ENCODE measurements at regions of chr9 and their contacts with region 1.

Region 1: DNA sequence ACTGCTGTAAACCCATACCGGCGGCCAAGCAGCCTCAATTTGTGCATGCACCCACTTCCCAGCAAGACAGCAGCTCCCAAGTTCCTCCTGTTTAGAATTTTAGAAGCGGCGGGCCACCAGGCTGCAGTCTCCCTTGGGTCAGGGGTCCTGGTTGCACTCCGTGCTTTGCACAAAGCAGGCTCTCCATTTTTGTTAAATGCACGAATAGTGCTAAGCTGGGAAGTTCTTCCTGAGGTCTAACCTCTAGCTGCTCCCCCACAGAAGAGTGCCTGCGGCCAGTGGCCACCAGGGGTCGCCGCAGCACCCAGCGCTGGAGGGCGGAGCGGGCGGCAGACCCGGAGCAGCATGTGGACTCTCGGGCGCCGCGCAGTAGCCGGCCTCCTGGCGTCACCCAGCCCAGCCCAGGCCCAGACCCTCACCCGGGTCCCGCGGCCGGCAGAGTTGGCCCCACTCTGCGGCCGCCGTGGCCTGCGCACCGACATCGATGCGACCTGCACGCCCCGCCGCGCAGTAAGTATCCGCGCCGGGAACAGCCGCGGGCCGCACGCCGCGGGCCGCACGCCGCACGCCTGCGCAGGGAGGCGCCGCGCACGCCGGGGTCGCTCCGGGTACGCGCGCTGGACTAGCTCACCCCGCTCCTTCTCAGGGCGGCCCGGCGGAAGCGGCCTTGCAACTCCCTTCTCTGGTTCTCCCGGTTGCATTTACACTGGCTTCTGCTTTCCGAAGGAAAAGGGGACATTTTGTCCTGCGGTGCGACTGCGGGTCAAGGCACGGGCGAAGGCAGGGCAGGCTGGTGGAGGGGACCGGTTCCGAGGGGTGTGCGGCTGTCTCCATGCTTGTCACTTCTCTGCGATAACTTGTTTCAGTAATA is at the start of gene FXN:
- DNase-seq: peak; percentile 61 to 84 (median 78)
- ATAC-seq: peak; percentile 90 to 93
- H3K4me3 Mint-ChIP-seq: peak within 1 kb of the TSS; percentile 92 to 99 (median 96)
- H3K27ac Mint-ChIP-seq: peak within 1 kb of the TSS; percentile 87 to 95 (median 92)
- H3K4me1 Mint-ChIP-seq: peaks cover 16 to 50% (median 24%) of the 10 kb centered on the region in 4 donors
- H3K27me3 Mint-ChIP-seq: no peaks in the 10 kb centered on the region
- polyA plus RNA-seq, gene FXN: 51.2 to 78.9 (median 59.9) TPM

Region 2: DNA sequence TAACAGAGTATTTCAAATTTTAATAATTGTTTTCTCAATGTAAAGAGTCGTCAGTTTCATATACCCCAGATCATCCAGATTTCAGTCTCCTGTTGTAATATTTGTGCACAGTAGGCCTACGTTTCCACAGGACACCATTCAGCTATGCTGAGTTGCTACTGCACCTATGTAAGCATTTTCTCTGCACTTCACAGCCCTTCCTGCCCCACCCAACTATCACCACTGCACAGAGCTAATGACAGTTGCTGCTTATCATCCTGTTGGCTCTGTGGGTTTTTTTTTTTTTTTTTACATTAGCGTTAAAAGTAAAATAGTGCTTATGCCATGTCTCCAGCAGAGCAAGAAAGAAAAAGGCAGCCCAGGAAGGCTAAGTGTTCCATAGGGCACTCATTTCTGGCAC is 15.9 kb before region 1 on chr9:
- POLR2A ChIA-PET with region 1: interaction called, 23 read pairs
- DNase-seq: peak in 7 of 10 donors; percentile 19 to 76 (median 53)
- ATAC-seq: peak; percentile 99 to 100
- H3K4me3 Mint-ChIP-seq: peak overlapping the region in 9 of 10 donors; percentile 36 to 72 (median 59)
- H3K27ac Mint-ChIP-seq: peak overlapping the region in 7 of 10 donors; percentile 38 to 82 (median 74)
- H3K4me1 Mint-ChIP-seq: peaks cover 26 to 46% (median 31%) of the 10 kb centered on the region in 4 donors
- H3K27me3 Mint-ChIP-seq: peaks cover 0 to 10% (median 0%) of the 10 kb centered on the region in 5 donors

Region 3: GRCh38 chr9:69768716-69769115 is 733.0 kb after region 1 on chr9:
- POLR2A ChIA-PET with region 1: interaction called, 11 read pairs
- DNase-seq: no peak
- ATAC-seq: no peak
- H3K4me3 Mint-ChIP-seq: no peak overlapping the region
- H3K27ac Mint-ChIP-seq: no peak overlapping the region
- H3K4me1 Mint-ChIP-seq: no peaks in the 10 kb centered on the region
- H3K27me3 Mint-ChIP-seq: no peaks in the 10 kb centered on the region

Measured in naive thymus-derived CD8-positive, alpha-beta T cell (primary cell).